ENCODE measurements at regions of chr7 and their contacts with region 1.

Region 1: GRCh38 chr7:136009488-136010079 is 32.4 kb upstream of the MTPN start:
- DNase-seq: peak in 2 of 5 donors; percentile 22 to 45
- H3K4me3 ChIP-seq: no peak overlapping the region
- H3K4me3 Mint-ChIP-seq: no peak overlapping the region
- H3K27ac ChIP-seq: no peak overlapping the region
- H3K27ac Mint-ChIP-seq: no peak overlapping the region
- H3K4me1 ChIP-seq: no peaks in the 10 kb centered on the region
- H3K4me1 Mint-ChIP-seq: peaks cover 7 to 17% (median 11%) of the 10 kb centered on the region in 3 donors
- H3K27me3 ChIP-seq: no peaks in the 10 kb centered on the region
- H3K27me3 Mint-ChIP-seq: peaks cover 0 to 2% of the 10 kb centered on the region in 2 donors

Region 2: GRCh38 chr7:135801045-135801693 is 208.4 kb before region 1 on chr7:
- CTCF ChIA-PET with region 1: interaction called, 14 read pairs
- POLR2A ChIA-PET with region 1: no interaction called
- DNase-seq: peak in 3 of 5 donors; percentile 14 to 49 (median 48)
- H3K4me3 ChIP-seq: no peak overlapping the region
- H3K4me3 Mint-ChIP-seq: peak overlapping the region in 5 of 7 donors; percentile 13 to 73 (median 35)
- H3K27ac ChIP-seq: no peak overlapping the region
- H3K27ac Mint-ChIP-seq: no peak overlapping the region
- H3K4me1 ChIP-seq: peaks cover 5% of the 10 kb centered on the region
- H3K4me1 Mint-ChIP-seq: peaks cover 7 to 16% (median 8%) of the 10 kb centered on the region in 3 donors
- H3K27me3 ChIP-seq: peaks cover 15% of the 10 kb centered on the region
- H3K27me3 Mint-ChIP-seq: peaks cover 3 to 23% of the 10 kb centered on the region in 2 donors

Region 3: GRCh38 chr7:135970682-135971365 is 38.8 kb before region 1 on chr7:
- CTCF ChIA-PET with region 1: no interaction called
- POLR2A ChIA-PET with region 1: no interaction called
- DNase-seq: no peak
- H3K4me3 ChIP-seq: no peak overlapping the region
- H3K4me3 Mint-ChIP-seq: peak overlapping the region in 6 of 7 donors; percentile 7 to 58 (median 22)
- H3K27ac ChIP-seq: no peak overlapping the region
- H3K27ac Mint-ChIP-seq: peak overlapping the region in 6 of 8 donors; percentile 6 to 72 (median 26)
- H3K4me1 ChIP-seq: peaks cover 66% of the 10 kb centered on the region
- H3K4me1 Mint-ChIP-seq: peaks cover 77 to 93% (median 91%) of the 10 kb centered on the region in 3 donors
- H3K27me3 ChIP-seq: no peaks in the 10 kb centered on the region
- H3K27me3 Mint-ChIP-seq: no peaks in the 10 kb centered on the region

Region 4: DNA sequence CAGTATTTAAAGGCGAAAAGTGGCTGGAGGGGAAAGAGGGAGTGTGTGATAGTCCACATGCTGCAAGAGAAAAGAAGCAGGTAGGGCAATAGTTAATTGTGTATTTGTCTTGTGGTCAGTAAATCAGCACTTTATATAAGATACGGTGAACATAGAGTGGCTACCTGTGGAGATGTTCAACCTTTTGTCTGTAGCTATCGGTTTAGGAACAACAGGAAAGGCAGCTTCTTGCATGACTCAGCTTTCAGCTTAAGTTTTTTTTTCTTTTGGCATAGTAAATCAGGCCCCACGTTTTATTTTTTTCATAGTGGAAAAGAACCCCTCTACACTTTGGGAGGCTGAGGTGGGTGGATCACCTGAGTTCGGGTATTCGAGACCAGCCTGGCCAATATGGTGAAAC is 18.3 kb before region 1 on chr7:
- CTCF ChIA-PET with region 1: no interaction called
- POLR2A ChIA-PET with region 1: no interaction called
- DNase-seq: no peak
- H3K4me3 ChIP-seq: no peak overlapping the region
- H3K4me3 Mint-ChIP-seq: no peak overlapping the region
- H3K27ac ChIP-seq: peak overlapping the region; percentile 17
- H3K27ac Mint-ChIP-seq: peak overlapping the region in 2 of 8 donors; percentile 19 to 33
- H3K4me1 ChIP-seq: peaks cover 5% of the 10 kb centered on the region
- H3K4me1 Mint-ChIP-seq: peaks cover 24 to 36% (median 34%) of the 10 kb centered on the region in 3 donors
- H3K27me3 ChIP-seq: no peaks in the 10 kb centered on the region
- H3K27me3 Mint-ChIP-seq: no peaks in the 10 kb centered on the region